PC-3 (cell line): ENCODE measurements at regions of chr1 and their contacts with region 1.

Region 1: GRCh38 chr1:26666855-26667254 is 29.0 kb upstream of the ARID1A start:
- DNase-seq: peak; percentile 36
- ATAC-seq: no peak
- H3K4me3 ChIP-seq: no peak overlapping the region
- H3K27ac ChIP-seq: no peak overlapping the region
- H3K4me1 ChIP-seq: no peaks in the 10 kb centered on the region; the same call in 1 of the 2 replicates
- H3K27me3 ChIP-seq: no peaks in the 10 kb centered on the region
- CTCF ChIP-seq: no peak

Region 2: DNA sequence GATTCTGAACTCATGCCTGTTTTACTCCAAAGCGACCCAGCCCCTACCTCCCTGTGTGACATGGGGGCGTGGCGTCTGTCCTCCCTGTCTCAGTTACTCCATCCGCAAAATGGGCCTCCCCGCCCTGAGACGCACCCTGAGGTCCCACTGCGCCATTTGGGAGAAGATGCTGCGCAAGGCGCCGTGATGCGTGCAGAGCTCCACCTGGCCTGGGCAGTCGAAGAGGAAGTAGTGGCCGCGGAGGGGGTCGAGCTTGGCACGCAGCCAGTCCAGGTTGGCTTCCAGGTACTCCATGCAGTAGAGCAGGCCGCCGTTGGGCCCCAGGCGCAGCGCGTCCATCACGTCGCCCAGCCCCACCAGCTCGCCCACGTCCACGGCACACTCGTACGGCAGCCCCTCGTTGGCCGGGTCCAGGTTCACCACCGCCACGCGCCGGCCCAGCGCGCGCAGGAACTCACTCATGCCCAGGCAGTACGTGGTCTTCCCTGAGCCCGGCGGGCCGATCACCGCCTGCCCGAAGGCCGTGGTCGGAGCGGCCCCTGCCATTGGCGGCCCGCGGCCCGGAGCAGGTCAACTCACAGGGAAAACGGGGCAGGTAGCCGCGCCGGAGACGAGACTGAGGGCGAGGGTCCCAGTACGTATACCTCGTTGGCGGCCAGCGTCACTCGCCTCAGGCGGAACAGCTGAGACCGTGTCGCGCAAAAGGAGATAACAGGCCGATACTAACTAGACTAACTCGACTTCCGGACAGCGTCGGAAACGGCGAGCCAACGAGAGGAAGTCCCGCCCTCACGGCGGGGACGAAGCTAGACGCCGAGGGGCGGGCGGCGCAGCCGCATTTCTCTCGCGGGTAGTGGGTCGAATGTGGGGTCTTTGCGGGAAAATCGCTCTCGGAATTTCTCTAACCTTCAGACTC is 223.0 kb after region 1 on chr1 and contains the start of gene GPN2:
- CTCF ChIA-PET with region 1: interaction called, 13 read pairs
- POLR2A ChIA-PET with region 1: no interaction called
- intact Hi-C with region 1: no loop called
- DNase-seq: peak; percentile 72
- ATAC-seq: peak; percentile 95
- H3K4me3 ChIP-seq: peak within 1 kb of the TSS; percentile 95
- H3K27ac ChIP-seq: peak within 1 kb of the TSS; percentile 46
- H3K4me1 ChIP-seq: peaks cover 16% of the 10 kb centered on the region
- H3K27me3 ChIP-seq: no peaks in the 10 kb centered on the region
- CTCF ChIP-seq: no peak
- total RNA-seq, gene GPN2: 24.6 and 28.2 TPM in 2 replicates

Region 3: GRCh38 chr1:26949926-26950319 is 283.1 kb after region 1 on chr1:
- CTCF ChIA-PET with region 1: no interaction called
- POLR2A ChIA-PET with region 1: no interaction called
- intact Hi-C with region 1: no loop called
- DNase-seq: peak; percentile 29
- ATAC-seq: peak; percentile 55
- H3K4me3 ChIP-seq: no peak overlapping the region
- H3K27ac ChIP-seq: no peak overlapping the region
- H3K4me1 ChIP-seq: peaks cover 10% of the 10 kb centered on the region; the same call in 1 of the 2 replicates
- H3K27me3 ChIP-seq: no peaks in the 10 kb centered on the region
- CTCF ChIP-seq: no peak